Activated CD4-positive, alpha-beta T cell treated with anti-CD3 and anti-CD28 coated beads for 36 hours (primary cell): ENCODE measurements at regions of chr1 and their contacts with region 1.

Region 1: DNA sequence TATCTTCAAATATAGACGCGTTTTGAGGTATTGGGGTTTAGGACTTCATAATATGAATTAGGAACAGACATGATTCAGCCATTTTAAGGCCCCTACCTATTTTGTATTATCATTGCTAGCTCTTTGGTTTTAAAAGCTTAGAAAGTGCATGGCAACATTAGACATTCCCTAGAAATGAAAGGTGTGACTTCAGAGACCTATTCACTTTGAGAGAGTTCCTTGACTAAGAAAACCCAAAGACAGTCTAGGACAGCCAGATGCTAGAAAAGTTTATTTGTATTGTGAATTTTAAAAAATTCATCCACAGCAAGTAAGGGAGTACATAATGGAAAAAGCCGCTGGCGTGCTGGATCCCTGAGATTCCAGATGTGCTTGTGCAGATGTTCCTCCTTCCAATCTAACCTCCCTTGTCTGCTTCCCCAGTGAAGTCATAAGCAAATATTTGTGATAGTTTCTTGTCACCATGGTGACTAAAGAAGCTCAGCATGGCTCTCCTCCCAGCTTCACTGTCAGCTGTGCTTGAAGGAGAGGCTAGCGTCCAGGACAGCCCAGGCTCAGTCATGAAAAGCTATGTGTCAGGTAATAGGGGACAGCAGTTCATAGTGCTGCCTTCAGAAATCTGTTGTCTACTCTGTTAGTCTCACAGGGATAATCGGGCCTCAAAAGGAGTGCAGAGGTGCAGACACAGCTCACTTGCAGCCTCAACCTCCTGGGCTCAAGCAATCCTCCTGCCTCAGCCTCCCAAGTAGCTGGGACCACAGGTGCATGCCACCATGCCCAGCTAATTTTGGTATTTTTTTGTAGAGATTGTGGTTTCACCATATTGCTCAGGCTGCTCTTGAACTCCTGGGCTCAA is 34.8 kb downstream of the KPNA6 start:
- DNase-seq: no peak
- ATAC-seq: no peak
- H3K4me3 Mint-ChIP-seq: no peak overlapping the region
- H3K27ac Mint-ChIP-seq: no peak overlapping the region
- H3K4me1 Mint-ChIP-seq: peaks cover 65% of the 10 kb centered on the region
- H3K27me3 Mint-ChIP-seq: no peaks in the 10 kb centered on the region

Region 2: DNA sequence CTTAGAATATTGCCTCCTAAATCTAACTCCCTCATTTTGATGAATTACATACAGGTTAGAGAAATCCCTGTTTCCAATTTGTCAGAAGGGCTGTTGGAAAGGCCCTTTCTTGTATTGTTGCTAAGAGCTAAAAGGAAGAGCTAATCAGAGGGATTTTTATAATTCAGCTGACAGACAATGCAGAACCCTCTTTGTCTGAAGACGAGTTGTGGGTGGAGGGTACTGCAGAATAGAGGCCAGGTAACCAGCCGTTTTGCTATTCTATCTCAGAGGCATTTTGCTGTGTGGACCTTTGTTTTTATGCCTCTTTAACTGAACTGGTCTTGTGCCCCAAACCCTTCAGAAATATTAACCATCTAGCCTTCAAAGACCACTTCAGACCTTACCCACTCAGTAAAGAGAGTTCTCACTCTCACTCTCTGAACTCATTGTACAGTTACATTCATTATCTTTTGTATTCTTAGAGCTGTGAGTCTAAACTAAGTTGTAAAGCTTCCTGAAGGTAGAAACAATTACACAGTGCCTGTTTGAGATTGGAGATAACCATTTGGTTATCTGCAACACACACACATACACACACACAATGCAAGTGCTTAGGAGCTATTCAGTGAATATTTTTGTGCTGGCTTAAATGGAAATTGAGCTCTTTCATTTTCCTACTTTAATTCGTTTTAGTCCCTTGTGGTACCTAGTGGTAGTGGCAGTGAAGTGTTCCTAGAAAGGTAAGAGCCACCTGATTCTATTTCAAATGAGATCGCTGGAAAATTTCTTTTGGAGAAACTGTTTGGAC is 15.1 kb before region 1 on chr1:
- CTCF ChIA-PET with region 1: interaction called, 10 read pairs
- POLR2A ChIA-PET with region 1: interaction called, 7 read pairs
- intact Hi-C with region 1: no loop called
- DNase-seq: no peak
- ATAC-seq: no peak
- H3K4me3 Mint-ChIP-seq: no peak overlapping the region
- H3K27ac Mint-ChIP-seq: peak overlapping the region; percentile 33
- H3K4me1 Mint-ChIP-seq: peaks cover 41% of the 10 kb centered on the region
- H3K27me3 Mint-ChIP-seq: no peaks in the 10 kb centered on the region

Region 3: DNA sequence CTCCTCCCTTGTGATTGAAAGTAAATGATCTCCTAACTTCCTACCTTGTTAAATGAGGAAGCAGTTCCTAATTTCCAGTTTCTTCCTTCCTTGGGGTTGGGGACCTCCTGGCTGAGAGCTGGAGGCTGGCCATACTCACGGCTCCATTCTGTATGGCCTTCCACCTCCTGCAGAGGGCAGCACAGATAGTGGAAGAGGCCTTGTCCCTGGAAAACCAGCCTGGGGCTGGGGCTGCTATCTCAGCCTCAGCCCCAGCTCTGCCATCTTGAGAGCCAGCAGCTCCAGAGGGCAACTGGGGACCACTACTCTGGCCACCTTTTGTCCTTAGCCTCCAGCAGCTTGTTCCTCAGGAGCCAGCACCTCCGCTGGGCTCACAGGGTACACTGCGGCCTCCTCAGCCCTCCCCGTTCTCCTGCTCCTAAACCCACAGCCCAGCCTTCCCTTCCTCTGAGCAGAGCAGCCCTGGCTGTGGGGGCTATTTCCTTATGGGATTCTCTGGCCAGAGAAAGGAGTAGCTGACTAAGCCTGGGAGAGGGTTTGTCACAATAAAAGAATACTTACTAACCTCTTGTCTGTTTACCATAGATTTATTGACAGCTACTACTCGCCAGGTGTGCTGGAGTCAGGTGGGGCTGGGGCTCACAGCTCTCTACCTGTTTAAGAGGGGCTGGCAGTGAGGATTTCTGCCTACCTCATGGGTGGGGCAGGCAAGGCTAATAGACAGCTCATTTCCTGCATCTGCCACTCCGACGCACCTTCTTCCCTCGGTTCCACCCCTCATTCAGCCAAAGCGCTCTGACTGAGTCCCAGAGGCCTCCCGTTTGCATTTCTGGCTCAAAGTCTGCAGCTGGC is 73.2 kb after region 1 on chr1:
- CTCF ChIA-PET with region 1: no interaction called
- POLR2A ChIA-PET with region 1: no interaction called
- intact Hi-C with region 1: no loop called
- DNase-seq: peak; percentile 79
- ATAC-seq: peak; percentile 97
- H3K4me3 Mint-ChIP-seq: no peak overlapping the region
- H3K27ac Mint-ChIP-seq: peak overlapping the region; percentile 8
- H3K4me1 Mint-ChIP-seq: peaks cover 15% of the 10 kb centered on the region
- H3K27me3 Mint-ChIP-seq: no peaks in the 10 kb centered on the region

Region 4: DNA sequence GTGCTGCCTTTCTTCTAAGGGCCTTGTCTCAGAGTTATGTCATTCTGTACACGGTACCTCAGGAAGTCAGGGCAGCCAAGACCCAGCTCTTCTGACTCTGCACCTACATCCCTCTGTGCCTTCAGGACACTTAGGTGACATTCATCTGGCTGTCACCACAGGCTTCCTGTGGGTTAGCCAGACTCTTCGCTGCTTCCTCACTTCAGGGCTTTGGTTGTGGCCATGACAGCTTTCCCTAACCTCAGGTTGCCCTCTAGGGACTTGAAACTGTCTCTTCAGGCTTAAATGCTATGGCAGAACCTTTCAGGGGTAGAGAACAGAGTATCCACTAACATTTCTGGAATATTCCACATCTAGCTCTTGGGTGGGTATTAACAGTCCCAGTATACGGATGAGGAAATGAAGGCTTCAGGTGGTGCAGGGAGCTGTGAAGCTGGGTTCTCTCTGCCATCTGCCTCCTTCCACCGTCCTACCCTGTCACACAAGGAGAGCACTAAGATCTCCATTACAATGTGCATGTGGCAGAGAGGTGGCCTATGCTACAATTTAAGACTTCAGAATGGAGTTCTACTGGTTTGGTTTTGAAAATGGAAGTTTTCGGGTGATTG is 229.6 kb after region 1 on chr1:
- CTCF ChIA-PET with region 1: no interaction called
- POLR2A ChIA-PET with region 1: no interaction called
- intact Hi-C with region 1: no loop called
- DNase-seq: peak; percentile 51
- ATAC-seq: peak; percentile 78
- H3K4me3 Mint-ChIP-seq: no peak overlapping the region
- H3K27ac Mint-ChIP-seq: peak overlapping the region; percentile 44
- H3K4me1 Mint-ChIP-seq: peaks cover 13% of the 10 kb centered on the region
- H3K27me3 Mint-ChIP-seq: no peaks in the 10 kb centered on the region